Endothelial cell of umbilical vein (primary cell): ENCODE measurements at regions of chr2 and their contacts with region 1.

Region 1: GRCh38 chr2:170815746-170816503 is 762 bp upstream of the GAD1 start:
- DNase-seq: peak; percentile 31
- H3K4me3 ChIP-seq: no peak overlapping the region
- H3K27ac ChIP-seq: no peak overlapping the region
- H3K4me1 ChIP-seq: peaks cover 16% of the 10 kb centered on the region
- H3K27me3 ChIP-seq: peaks cover 62 to 72% of the 10 kb centered on the region in 2 experiments
- CTCF ChIP-seq: peak; percentile 72 to 82
- POLR2A ChIP-seq: no peak

Region 2: DNA sequence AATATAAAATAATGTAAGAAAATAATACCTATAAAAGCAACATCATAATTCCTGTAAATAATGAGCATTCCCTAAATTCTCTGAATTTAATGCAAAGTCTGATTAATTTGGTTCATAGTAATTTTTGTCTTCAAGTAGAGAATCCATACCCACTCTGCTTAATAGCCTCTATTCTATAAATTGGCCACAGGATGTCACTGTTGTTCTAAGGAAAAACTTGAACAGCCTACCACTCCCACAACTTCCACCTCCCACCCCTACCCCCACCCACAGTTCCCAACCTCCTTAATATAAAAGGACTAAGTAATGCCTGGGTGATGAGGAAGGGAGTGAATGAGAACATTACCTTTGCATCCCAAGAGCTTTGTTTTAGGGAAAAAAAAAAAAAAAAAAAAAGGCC is 1363.8 kb before region 1 on chr2:
- CTCF ChIA-PET with region 1: interaction called, 7 read pairs
- POLR2A ChIA-PET with region 1: no interaction called
- dilution Hi-C with region 1: no loop called
- intact Hi-C with region 1: loop called (anchors 1 kb)
- DNase-seq: peak; percentile 39
- H3K4me3 ChIP-seq: no peak overlapping the region
- H3K27ac ChIP-seq: no peak overlapping the region
- H3K4me1 ChIP-seq: no peaks in the 10 kb centered on the region
- H3K27me3 ChIP-seq: no peaks in the 10 kb centered on the region
- CTCF ChIP-seq: peak in 1 of 2 donors; percentile 22
- POLR2A ChIP-seq: no peak

Region 3: GRCh38 chr2:170324640-170325046 is 491.3 kb before region 1 on chr2:
- CTCF ChIA-PET with region 1: interaction called, 17 read pairs
- POLR2A ChIA-PET with region 1: interaction called, 7 read pairs
- dilution Hi-C with region 1: no loop called
- intact Hi-C with region 1: loop called (anchors 1 kb)
- DNase-seq: peak; percentile 40
- H3K4me3 ChIP-seq: no peak overlapping the region
- H3K27ac ChIP-seq: no peak overlapping the region
- H3K4me1 ChIP-seq: peaks cover 1% of the 10 kb centered on the region
- H3K27me3 ChIP-seq: peaks cover 3% of the 10 kb centered on the region in 2 experiments
- CTCF ChIP-seq: peak; percentile 56 to 57
- POLR2A ChIP-seq: no peak

Region 4: DNA sequence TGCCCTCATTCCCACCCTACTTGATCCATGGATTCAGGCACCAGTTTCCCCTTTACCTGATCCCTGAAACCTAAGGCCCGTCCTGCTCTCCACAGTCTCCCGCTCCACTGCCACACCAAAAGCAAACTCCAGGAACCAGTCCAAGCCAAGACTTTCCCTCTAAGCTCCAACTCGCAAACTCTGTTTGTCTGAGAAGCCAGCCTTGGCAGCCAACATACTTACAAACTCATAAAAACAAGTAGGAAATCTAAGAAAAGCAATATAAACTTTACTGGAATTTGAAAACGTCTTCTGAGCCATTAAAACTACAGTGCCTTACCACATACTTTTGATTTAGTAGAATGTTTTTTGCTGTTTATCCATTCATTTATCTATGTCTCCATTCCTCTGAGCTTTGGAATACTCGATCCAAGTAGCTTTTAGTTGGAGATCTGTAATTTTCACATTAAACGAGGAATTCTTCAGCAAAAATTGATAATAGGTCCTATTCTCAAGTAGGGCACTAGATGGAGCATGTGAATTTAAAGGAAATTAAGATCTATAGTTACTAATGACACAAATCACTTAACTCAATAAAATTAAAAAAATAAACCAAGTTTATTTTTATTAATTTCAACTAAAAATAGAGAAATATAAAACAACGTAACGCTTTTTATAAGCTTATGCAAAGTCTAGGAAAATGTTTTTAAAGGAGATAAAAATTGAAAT is 438.3 kb before region 1 on chr2:
- CTCF ChIA-PET with region 1: interaction called, 63 read pairs
- POLR2A ChIA-PET with region 1: no interaction called
- dilution Hi-C with region 1: no loop called
- intact Hi-C with region 1: no loop called
- DNase-seq: no peak
- H3K4me3 ChIP-seq: no peak overlapping the region
- H3K27ac ChIP-seq: no peak overlapping the region
- H3K4me1 ChIP-seq: no peaks in the 10 kb centered on the region
- H3K27me3 ChIP-seq: peaks cover 15 to 30% of the 10 kb centered on the region in 2 experiments
- CTCF ChIP-seq: no peak
- POLR2A ChIP-seq: no peak

Region 5: GRCh38 chr2:170461884-170462283 is 354.0 kb before region 1 on chr2:
- CTCF ChIA-PET with region 1: interaction called, 21 read pairs
- POLR2A ChIA-PET with region 1: no interaction called
- dilution Hi-C with region 1: no loop called
- intact Hi-C with region 1: loop called (anchors 1 kb)
- DNase-seq: peak; percentile 12
- H3K4me3 ChIP-seq: no peak overlapping the region
- H3K27ac ChIP-seq: no peak overlapping the region
- H3K4me1 ChIP-seq: no peaks in the 10 kb centered on the region
- H3K27me3 ChIP-seq: no peaks in the 10 kb centered on the region
- CTCF ChIP-seq: peak in 1 of 2 donors; percentile 18
- POLR2A ChIP-seq: no peak

Region 6: GRCh38 chr2:170873035-170873692 is 57.2 kb after region 1 on chr2:
- CTCF ChIA-PET with region 1: interaction called, 13 read pairs
- POLR2A ChIA-PET with region 1: no interaction called
- dilution Hi-C with region 1: no loop called
- intact Hi-C with region 1: loop called (anchors 1 kb)
- DNase-seq: peak; percentile 79
- H3K4me3 ChIP-seq: peak overlapping the region in 1 of 3 experiments; percentile 26
- H3K27ac ChIP-seq: no peak overlapping the region
- H3K4me1 ChIP-seq: peaks cover 6% of the 10 kb centered on the region
- H3K27me3 ChIP-seq: peaks cover 0 to 2% of the 10 kb centered on the region in 2 experiments
- CTCF ChIP-seq: peak; percentile 92 to 96
- POLR2A ChIP-seq: no peak